ENCODE measurements at regions of chr2 and their contacts with region 1.

Region 1: DNA sequence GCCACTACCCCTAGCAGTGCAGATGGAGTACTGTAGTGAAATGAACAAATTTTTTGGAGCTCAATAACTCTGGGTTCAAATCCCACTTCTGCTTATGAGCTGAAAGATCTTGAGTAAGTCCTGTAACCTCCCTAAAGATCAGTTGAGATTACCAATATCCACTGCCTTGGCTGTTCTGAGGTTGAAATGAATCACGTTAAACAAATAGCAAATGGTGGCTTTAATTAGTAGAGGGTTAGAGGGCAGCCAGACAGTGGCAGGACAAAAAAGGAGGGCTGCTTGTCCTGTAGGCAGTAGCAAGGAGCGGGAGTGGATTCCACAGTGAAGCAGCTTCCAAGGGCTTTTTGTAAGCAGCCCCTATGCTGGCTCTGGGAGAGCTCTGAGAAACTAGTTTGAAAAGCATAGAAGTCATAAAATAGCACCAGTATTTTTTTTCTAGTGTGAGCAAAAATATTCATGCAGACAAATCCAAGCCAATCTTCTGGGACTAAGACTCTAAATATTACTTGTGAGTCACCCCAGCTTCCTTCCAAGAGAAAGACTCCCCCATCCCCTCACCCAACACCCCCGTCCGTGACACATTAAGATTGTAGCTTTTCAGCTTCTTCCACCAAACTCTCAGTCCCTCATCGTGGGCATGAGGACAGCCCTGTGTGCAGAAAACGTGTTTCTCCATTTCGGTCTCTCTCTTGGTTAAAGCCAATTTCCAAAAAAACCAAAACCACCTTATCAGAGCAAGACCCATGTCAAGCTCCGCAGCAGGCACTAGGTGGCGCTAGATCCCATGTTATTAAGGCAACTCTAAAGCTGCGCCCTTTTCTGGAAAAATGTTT is 123.5 kb upstream of the LGALSL start:
- DNase-seq: no peak
- ATAC-seq: peak; percentile 22
- H3K4me3 ChIP-seq: no peak overlapping the region
- H3K27ac ChIP-seq: no peak overlapping the region
- H3K4me1 ChIP-seq: peaks cover 41% of the 10 kb centered on the region
- H3K27me3 ChIP-seq: no peaks in the 10 kb centered on the region
- CTCF ChIP-seq: peak; percentile 82 to 92 (median 91)
- EP300 ChIP-seq: no peak
- POLR2A ChIP-seq: no peak
- RAD21 ChIP-seq: peak; percentile 97

Region 2: GRCh38 chr2:64108666-64109241 is 221.7 kb before region 1 on chr2:
- CTCF ChIA-PET with region 1: interaction called, 15 read pairs
- POLR2A ChIA-PET with region 1: interaction called, 4 read pairs
- RAD21 ChIA-PET with region 1: interaction called, 101 read pairs
- SMC1A ChIA-PET with region 1: interaction called, 104 read pairs
- in situ Hi-C with region 1: no loop called
- intact Hi-C with region 1: no loop called
- DNase-seq: no peak
- ATAC-seq: peak; percentile 12; the same call in 2 of the 3 replicates
- H3K4me3 ChIP-seq: no peak overlapping the region
- H3K27ac ChIP-seq: peak overlapping the region; percentile 44
- H3K4me1 ChIP-seq: peaks cover 33% of the 10 kb centered on the region
- H3K27me3 ChIP-seq: no peaks in the 10 kb centered on the region
- CTCF ChIP-seq: no peak
- EP300 ChIP-seq: no peak
- POLR2A ChIP-seq: no peak
- RAD21 ChIP-seq: no peak

Region 3: DNA sequence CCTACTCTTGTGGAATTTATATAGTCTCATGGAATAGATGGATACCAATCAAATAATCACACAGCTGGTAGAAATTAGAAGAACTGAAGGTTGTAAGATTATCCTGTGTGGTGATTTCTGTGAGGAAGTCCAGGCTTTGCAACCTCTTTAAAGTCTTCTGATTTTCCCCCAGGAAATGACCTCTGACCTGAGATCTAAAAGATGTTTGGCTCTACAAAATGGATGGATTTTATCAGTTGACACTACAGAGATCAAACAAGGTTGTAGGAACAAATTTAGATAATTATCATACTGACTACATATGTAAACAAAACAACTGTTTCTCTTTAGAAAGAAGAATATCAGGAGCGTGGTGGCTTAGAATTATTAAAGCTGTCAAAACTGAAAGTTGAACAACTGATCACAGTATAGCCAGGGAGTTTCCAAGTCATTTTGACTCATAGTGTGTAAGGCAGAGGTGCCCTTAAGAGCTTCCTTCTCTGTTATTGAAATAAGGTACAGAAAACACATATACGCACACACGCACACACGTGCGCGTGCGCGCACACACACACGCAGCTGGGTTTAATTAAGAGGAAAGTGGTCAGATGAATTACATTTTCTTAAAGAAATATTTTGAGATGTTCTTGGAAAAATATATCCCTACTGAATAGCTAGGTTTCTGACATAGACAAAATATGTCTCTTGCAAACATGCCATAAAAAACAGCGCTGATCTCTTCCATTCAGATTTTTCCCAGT is 150.7 kb before region 1 on chr2:
- CTCF ChIA-PET with region 1: interaction called, 8 read pairs
- POLR2A ChIA-PET with region 1: no interaction called
- RAD21 ChIA-PET with region 1: interaction called, 10 read pairs
- SMC1A ChIA-PET with region 1: interaction called, 11 read pairs
- in situ Hi-C with region 1: no loop called
- intact Hi-C with region 1: no loop called
- DNase-seq: peak; percentile 70
- ATAC-seq: peak; percentile 98
- H3K4me3 ChIP-seq: no peak overlapping the region
- H3K27ac ChIP-seq: peak overlapping the region; percentile 57
- H3K4me1 ChIP-seq: peaks cover 12% of the 10 kb centered on the region; the same call in 1 of the 2 replicates
- H3K27me3 ChIP-seq: no peaks in the 10 kb centered on the region
- CTCF ChIP-seq: no peak
- EP300 ChIP-seq: peak; percentile 64 to 69; a peak in 2 of 4 replicates
- POLR2A ChIP-seq: no peak
- RAD21 ChIP-seq: no peak

Region 4: DNA sequence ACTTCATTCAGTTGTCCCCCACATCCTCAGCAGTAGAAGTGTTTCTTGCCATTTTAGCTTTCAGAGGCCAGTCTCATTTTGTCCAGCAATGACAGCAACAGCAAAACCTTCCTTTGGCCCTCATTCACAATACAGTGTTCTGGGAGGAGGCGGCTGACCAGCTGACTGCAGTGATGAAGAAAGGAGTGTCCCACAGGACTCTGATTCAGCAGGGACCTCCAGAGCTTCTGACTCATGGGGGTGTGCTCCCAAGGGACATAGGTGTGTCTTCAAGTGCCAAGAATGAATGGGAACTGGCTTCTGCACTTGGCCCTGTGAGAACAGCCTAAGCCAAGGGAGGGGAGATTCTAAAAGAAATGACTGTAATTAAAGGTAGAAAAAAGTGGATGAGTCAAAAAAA is 39.3 kb before region 1 on chr2:
- CTCF ChIA-PET with region 1: interaction called, 109 read pairs
- POLR2A ChIA-PET with region 1: interaction called, 15 read pairs
- RAD21 ChIA-PET with region 1: interaction called, 157 read pairs
- SMC1A ChIA-PET with region 1: interaction called, 168 read pairs
- in situ Hi-C with region 1: no loop called
- intact Hi-C with region 1: loop called (anchors 2 kb)
- DNase-seq: no peak
- ATAC-seq: no peak
- H3K4me3 ChIP-seq: no peak overlapping the region
- H3K27ac ChIP-seq: no peak overlapping the region
- H3K4me1 ChIP-seq: peaks cover 12% of the 10 kb centered on the region
- H3K27me3 ChIP-seq: no peaks in the 10 kb centered on the region
- CTCF ChIP-seq: no peak
- EP300 ChIP-seq: no peak
- POLR2A ChIP-seq: no peak
- RAD21 ChIP-seq: no peak

Region 5: GRCh38 chr2:64383016-64383591 is 52.6 kb after region 1 on chr2:
- CTCF ChIA-PET with region 1: no interaction called
- POLR2A ChIA-PET with region 1: no interaction called
- RAD21 ChIA-PET with region 1: no interaction called
- SMC1A ChIA-PET with region 1: no interaction called
- in situ Hi-C with region 1: no loop called
- intact Hi-C with region 1: no loop called
- DNase-seq: no peak
- ATAC-seq: no peak
- H3K4me3 ChIP-seq: no peak overlapping the region
- H3K27ac ChIP-seq: no peak overlapping the region
- H3K4me1 ChIP-seq: no peaks in the 10 kb centered on the region
- H3K27me3 ChIP-seq: no peaks in the 10 kb centered on the region; a peak in 2 of 4 replicates
- CTCF ChIP-seq: no peak
- EP300 ChIP-seq: no peak
- POLR2A ChIP-seq: no peak
- RAD21 ChIP-seq: no peak

Region 6: DNA sequence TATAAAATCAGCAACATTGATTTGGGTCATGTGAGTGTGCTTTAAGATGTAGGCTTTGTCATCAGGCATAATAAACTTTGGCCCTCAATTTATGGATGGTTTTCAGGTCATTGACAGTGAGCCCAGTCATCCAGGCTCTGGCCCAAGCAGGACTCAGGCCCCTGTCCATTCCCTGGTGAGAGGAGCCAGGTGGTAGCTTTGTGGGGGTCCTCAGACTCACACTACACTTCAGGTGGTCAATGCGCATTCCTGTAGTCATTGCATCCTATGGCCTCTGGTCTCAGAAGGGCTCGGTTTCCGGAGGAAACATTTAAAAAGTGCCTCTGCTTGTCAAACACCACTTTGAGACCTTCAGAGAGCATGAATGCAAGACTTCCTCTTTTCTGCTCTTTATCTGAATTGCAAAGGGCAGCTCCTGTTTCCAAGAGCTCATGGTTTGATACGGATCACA is 143.6 kb after region 1 on chr2:
- CTCF ChIA-PET with region 1: interaction called, 10 read pairs
- POLR2A ChIA-PET with region 1: no interaction called
- RAD21 ChIA-PET with region 1: interaction called, 240 read pairs
- SMC1A ChIA-PET with region 1: interaction called, 300 read pairs
- in situ Hi-C with region 1: no loop called
- intact Hi-C with region 1: no loop called
- DNase-seq: no peak
- ATAC-seq: peak; percentile 79
- H3K4me3 ChIP-seq: no peak overlapping the region
- H3K27ac ChIP-seq: no peak overlapping the region
- H3K4me1 ChIP-seq: peaks cover 5% of the 10 kb centered on the region; the same call in 1 of the 2 replicates
- H3K27me3 ChIP-seq: no peaks in the 10 kb centered on the region
- CTCF ChIP-seq: no peak
- EP300 ChIP-seq: no peak
- POLR2A ChIP-seq: no peak
- RAD21 ChIP-seq: no peak

Region 7: DNA sequence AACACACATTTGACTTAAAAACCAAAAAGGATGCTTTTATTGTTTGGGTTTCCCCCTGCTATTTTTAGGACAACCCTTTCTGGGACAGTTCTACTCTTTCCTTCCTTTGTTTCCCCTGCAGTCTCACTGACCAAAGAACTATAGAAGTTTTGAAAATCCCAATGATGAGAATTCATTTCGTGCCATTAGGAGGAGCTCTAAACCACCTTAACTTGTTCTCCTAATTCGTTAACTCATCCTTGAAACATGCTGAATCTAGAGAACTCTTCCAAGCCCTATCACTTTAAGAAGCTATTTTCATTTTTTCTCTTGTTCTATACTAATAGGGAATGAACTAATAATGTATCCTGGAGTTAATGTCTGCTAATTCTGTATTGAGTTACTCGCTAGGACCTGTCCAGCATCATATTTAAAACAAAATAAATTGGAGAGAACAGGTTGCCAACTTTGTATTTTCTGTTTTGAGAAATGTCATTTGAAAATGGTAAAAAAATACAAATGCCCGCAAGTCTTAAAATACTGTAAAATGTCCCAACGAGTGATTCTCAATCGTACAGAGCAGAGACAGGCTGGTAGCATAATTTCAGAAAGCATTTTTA is 256.5 kb after region 1 on chr2:
- CTCF ChIA-PET with region 1: interaction called, 80 read pairs
- POLR2A ChIA-PET with region 1: interaction called, 8 read pairs
- RAD21 ChIA-PET with region 1: interaction called, 28 read pairs
- SMC1A ChIA-PET with region 1: interaction called, 25 read pairs
- in situ Hi-C with region 1: no loop called
- intact Hi-C with region 1: no loop called
- DNase-seq: no peak
- ATAC-seq: peak; percentile 30
- H3K4me3 ChIP-seq: no peak overlapping the region
- H3K27ac ChIP-seq: no peak overlapping the region
- H3K4me1 ChIP-seq: peaks cover 40% of the 10 kb centered on the region
- H3K27me3 ChIP-seq: no peaks in the 10 kb centered on the region
- CTCF ChIP-seq: peak; percentile 54 to 77 (median 63)
- EP300 ChIP-seq: no peak
- POLR2A ChIP-seq: no peak
- RAD21 ChIP-seq: peak; percentile 83

Region 8: DNA sequence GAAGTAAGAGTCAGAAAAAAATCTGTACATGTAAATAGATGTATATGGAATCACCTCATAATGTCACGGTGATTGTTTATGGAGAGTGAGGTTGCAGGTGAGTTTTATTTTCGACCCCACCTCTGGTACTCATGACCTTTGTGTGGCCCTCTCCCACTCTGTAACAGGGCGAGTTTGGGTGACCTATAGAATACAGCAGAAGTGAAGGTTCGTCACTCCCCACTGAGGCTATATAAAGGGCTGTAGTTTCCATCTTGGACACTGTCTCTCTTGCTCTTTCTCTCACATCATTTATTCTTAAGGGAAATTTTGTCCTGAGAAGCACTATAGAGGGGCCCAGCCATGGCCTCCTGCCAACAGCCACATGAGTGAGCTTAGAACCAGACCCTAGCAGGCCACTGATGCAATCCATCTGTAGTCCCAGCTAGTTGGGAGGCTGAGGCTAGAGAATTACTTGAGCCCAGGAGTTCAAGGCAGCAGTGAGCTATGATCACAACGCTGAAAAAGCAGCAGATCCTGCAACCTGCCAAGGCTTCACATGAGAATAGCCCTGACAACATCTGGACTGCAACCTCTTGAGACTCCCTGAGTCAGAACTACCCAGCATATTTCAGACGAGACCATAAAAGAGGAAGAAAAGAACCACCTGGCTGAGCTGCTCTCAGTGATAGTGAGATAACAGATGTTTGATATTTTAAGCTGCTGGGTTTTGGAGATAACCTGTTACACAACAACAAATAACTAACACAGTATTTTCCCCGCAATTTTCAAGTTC is 584.4 kb after region 1 on chr2:
- CTCF ChIA-PET with region 1: interaction called, 12 read pairs
- POLR2A ChIA-PET with region 1: interaction called, 4 read pairs
- RAD21 ChIA-PET with region 1: interaction called, 11 read pairs
- SMC1A ChIA-PET with region 1: interaction called, 7 read pairs
- in situ Hi-C with region 1: no loop called
- intact Hi-C with region 1: no loop called
- DNase-seq: peak; percentile 96
- ATAC-seq: peak; percentile 68
- H3K4me3 ChIP-seq: peak overlapping the region; percentile 41
- H3K27ac ChIP-seq: peak overlapping the region; percentile 81
- H3K4me1 ChIP-seq: peaks cover 62% of the 10 kb centered on the region
- H3K27me3 ChIP-seq: no peaks in the 10 kb centered on the region
- CTCF ChIP-seq: no peak
- EP300 ChIP-seq: peak; percentile 73 to 80; a peak in 3 of 4 replicates
- POLR2A ChIP-seq: peak; percentile 72
- RAD21 ChIP-seq: no peak

Region 9: GRCh38 chr2:65382776-65383357 is 1052.4 kb after region 1 on chr2:
- CTCF ChIA-PET with region 1: no interaction called
- POLR2A ChIA-PET with region 1: no interaction called
- RAD21 ChIA-PET with region 1: no interaction called
- SMC1A ChIA-PET with region 1: no interaction called
- in situ Hi-C with region 1: no loop called
- intact Hi-C with region 1: no loop called
- DNase-seq: no peak
- ATAC-seq: no peak
- H3K4me3 ChIP-seq: no peak overlapping the region
- H3K27ac ChIP-seq: peak overlapping the region; percentile 65
- H3K4me1 ChIP-seq: peaks cover 42% of the 10 kb centered on the region
- H3K27me3 ChIP-seq: no peaks in the 10 kb centered on the region
- CTCF ChIP-seq: peak in 1 of 3 experiments; percentile 37; a peak in 2 of 6 replicates
- EP300 ChIP-seq: no peak
- POLR2A ChIP-seq: no peak
- RAD21 ChIP-seq: peak; percentile 63